Heart right ventricle (tissue), 16 donors: ENCODE measurements at regions of chr10 and their contacts with region 1.

Region 1: GRCh38 chr10:89074120-89074519 is 83.5 kb downstream of the FAS start:
- DNase-seq: peak; percentile 34 to 51
- ATAC-seq: peak; percentile 52 to 87 (median 78)
- H3K4me3 ChIP-seq: no peak overlapping the region
- H3K27ac ChIP-seq: peak overlapping the region in 9 of 10 donors; percentile 29 to 68 (median 57)
- H3K4me1 ChIP-seq: peaks cover 3 to 22% (median 16%) of the 10 kb centered on the region in 9 donors
- H3K27me3 ChIP-seq: no peaks in the 10 kb centered on the region
- CTCF ChIP-seq: no peak

Region 2: DNA sequence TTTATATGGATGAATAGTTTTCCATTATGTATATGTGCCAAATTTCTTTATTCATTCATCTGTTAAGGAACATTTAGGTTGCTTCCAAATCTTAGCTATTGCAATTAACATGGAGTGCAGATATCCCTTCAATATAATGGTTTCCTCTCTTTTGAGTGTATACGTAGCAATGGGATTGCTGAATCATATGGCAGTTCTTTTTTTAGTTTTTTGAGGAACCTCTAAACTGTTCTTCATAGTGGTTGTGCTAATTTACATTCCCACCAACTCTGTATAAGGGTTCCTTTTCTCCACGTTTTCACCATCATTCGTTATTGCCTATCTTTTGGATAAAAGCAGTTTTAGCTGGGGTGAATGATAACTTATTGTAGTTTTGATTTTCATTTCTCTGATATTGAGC is 37.0 kb before region 1 on chr10:
- intact Hi-C with region 1: loop called in 1 of 10 experiments (anchors 5 kb)
- DNase-seq: no peak
- ATAC-seq: no peak
- H3K4me3 ChIP-seq: no peak overlapping the region
- H3K27ac ChIP-seq: no peak overlapping the region
- H3K4me1 ChIP-seq: peaks cover 0 to 24% (median 7%) of the 10 kb centered on the region in 9 donors
- H3K27me3 ChIP-seq: no peaks in the 10 kb centered on the region
- CTCF ChIP-seq: no peak

Region 3: DNA sequence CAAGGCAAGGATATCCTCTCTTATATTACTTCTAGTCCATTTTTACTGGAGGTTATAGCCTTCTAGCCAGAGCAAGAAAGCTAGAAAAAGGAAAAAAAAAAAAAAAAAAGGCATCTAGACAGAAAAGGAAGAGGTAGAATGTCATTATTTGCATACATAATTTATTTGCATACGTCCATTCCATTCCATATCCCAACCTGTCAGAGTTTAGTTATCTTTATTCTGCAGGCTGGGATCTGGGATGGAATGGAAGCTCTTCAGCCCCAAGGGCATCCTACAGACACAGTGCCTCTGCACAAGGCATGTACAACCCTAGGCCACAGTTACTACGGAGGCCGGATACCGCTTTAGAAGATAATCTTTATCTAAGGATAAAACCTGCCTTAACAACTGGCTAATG is 123.4 kb after region 1 on chr10:
- intact Hi-C with region 1: loop called in 1 of 10 experiments (anchors 5 kb)
- DNase-seq: no peak
- ATAC-seq: no peak
- H3K4me3 ChIP-seq: no peak overlapping the region
- H3K27ac ChIP-seq: no peak overlapping the region
- H3K4me1 ChIP-seq: no peaks in the 10 kb centered on the region
- H3K27me3 ChIP-seq: peaks cover 0 to under 1% (median 0%) of the 10 kb centered on the region in 7 donors
- CTCF ChIP-seq: no peak